Cardiac septum (tissue), 1 donor: ENCODE measurements at regions of chr3 and their contacts with region 1.

Region 1: GRCh38 chr3:9422712-9423424 is 25.5 kb downstream of the SETD5 start:
- DNase-seq: no peak

Region 2: DNA sequence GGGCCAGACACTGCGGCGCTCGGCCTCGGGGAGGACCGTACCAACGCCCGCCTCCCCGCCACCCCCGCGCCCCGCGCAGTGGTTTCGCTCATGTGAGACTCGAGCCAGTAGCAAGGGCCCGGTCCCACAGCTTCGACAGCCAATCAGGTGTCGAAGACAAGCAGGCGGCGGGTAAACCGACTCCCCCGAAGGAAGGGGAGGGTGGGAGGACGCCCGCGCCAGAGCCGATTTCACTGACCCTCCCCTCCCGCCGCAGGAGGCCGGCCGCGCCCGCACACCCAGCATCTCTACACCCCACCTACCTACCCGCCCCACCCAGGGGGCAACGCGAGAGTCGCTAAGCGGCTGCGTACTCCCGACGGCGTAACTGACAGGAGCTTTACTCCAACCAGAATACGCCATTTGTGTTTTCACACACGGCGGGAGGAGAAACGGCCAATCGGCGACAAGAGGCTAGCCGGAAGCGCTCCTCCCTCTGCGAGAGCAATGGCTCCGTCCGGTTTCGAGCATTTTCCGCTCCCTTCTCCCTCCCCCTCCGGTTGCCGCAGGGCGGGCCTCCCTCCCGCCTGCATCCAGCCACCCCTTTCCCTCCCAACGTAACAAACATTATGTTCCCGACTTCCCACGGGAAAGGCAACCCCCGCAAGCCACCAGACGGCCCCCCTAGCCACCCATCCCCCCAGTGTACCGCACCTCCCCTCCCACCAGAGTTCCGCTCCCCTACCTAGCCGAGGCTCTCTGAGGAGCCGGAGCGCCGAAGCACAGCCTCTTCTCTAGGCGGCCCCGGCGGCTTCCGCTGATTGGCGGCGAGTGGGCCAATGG is 26.0 kb before region 1 on chr3:
- intact Hi-C with region 1: loop called (anchors 1 kb)
- DNase-seq: peak; percentile 100